Motor neuron (in vitro differentiated cells): ENCODE measurements at regions of chr11 and their contacts with region 1.

Region 1: GRCh38 chr11:95764267-95764898 is 25.2 kb downstream of the FAM76B start:
- ATAC-seq: peak; percentile 59 to 79 (median 72)
- H3K4me3 ChIP-seq: no peak overlapping the region
- H3K27ac ChIP-seq: no peak overlapping the region
- H3K4me1 ChIP-seq: peaks cover 0 to 6% of the 10 kb centered on the region in 2 donors

Region 2: GRCh38 chr11:94638902-94639373 is 1125.4 kb before region 1 on chr11:
- in situ Hi-C with region 1: loop called in 1 of 9 experiments (anchors 25 kb)
- ATAC-seq: peak in 3 of 8 experiments; percentile 36 to 82 (median 64)
- H3K4me3 ChIP-seq: no peak overlapping the region
- H3K27ac ChIP-seq: no peak overlapping the region
- H3K4me1 ChIP-seq: no peaks in the 10 kb centered on the region

Region 3: DNA sequence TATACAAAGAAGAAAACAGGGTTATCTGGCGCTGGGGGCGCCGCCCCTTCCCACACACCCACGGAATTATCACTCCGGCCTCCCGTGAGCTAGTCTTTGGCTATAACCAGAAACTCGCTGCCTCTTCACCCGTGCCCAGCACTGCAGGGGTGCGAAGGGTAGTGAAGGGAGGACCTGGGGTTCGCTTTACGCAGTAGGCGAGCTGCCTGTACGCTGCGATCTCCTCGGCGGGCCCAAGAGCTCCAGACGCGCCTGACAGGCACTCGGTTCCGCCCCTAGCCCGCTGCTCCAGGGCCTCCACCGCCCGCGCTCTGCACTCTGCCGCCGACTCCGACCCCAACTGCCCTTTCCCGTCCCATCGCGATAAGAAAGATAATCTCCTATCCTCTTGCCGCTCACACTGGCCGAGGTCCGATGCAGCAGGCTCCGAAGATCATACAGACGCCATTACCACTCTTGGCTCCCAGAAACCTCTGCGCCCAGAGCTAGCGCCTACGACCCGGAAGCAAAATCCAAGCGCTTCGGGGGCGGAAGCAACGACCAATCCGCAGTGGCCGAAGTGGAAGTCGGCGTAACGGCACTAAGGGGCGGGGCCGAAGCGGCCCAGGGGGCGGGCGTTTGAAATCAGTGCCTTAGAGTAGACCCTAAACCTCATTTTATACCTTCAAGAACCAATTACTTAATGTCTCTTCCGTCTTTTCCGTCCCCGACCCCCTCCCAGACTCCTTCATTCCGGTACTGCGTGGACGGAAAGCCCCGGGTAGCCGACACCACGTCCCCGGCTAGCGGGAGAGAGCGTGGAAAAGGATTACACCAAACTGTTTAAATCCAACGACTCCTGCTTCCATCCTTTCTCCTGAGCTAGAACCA is 791.0 kb before region 1 on chr11 and contains the starts of genes CWC15 and KDM4D:
- in situ Hi-C with region 1: loop called in 1 of 9 experiments (anchors 25 kb)
- ATAC-seq: peak; percentile 98 to 99 (median 99)
- H3K4me3 ChIP-seq: peak within 1 kb of the TSS; percentile 60 to 98 (median 69)
- H3K27ac ChIP-seq: peak within 1 kb of the TSS; percentile 72 to 83
- H3K4me1 ChIP-seq: peaks cover 4 to 10% of the 10 kb centered on the region in 2 donors
- total RNA-seq, gene CWC15: 43.7 to 77.1 (median 60.1) TPM
- total RNA-seq, gene KDM4D: 0.97 to 3.9 (median 2.3) TPM

Region 4: GRCh38 chr11:95067039-95067840 is 697.1 kb before region 1 on chr11:
- in situ Hi-C with region 1: loop called in 2 of 9 experiments (anchors 25 kb)
- ATAC-seq: peak; percentile 77 to 85 (median 82)
- H3K4me3 ChIP-seq: peak overlapping the region; percentile 71 to 98 (median 91)
- H3K27ac ChIP-seq: peak overlapping the region; percentile 98
- H3K4me1 ChIP-seq: peaks cover 0 to 5% of the 10 kb centered on the region in 2 donors

Region 5: GRCh38 chr11:95150946-95151684 is 613.3 kb before region 1 on chr11:
- in situ Hi-C with region 1: loop called in 5 of 9 experiments (anchors 10 to 25 kb)
- ATAC-seq: peak; percentile 72 to 90 (median 86)
- H3K4me3 ChIP-seq: peak overlapping the region; percentile 15 to 28 (median 21)
- H3K27ac ChIP-seq: no peak overlapping the region
- H3K4me1 ChIP-seq: peaks cover 12 to 18% of the 10 kb centered on the region in 2 donors

Region 6: DNA sequence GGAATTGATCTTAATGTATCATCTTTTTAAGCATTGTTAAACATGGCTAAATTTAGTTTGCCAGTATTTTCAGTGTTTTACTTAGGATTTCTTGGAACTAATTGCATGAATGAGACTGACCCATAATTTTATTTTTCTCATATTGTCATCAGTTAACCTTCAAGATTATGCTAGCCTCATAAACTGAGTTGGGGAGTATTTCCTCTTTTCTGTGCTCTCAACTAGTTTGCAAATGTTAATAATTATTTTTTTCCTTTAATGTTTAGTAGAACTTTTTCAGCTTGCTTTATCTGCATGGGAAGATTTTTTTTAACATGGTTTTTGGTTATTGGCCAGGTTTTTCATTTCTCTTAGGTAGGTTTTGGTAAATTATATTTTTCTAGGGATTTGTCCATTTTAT is 298.0 kb before region 1 on chr11:
- in situ Hi-C with region 1: no loop called
- ATAC-seq: no peak
- H3K4me3 ChIP-seq: no peak overlapping the region
- H3K27ac ChIP-seq: no peak overlapping the region
- H3K4me1 ChIP-seq: peaks cover 0 to 3% of the 10 kb centered on the region in 2 donors